Common myeloid progenitor, CD34-positive (primary cell): ENCODE measurements at regions of chr4 and their contacts with region 1.

Region 1: DNA sequence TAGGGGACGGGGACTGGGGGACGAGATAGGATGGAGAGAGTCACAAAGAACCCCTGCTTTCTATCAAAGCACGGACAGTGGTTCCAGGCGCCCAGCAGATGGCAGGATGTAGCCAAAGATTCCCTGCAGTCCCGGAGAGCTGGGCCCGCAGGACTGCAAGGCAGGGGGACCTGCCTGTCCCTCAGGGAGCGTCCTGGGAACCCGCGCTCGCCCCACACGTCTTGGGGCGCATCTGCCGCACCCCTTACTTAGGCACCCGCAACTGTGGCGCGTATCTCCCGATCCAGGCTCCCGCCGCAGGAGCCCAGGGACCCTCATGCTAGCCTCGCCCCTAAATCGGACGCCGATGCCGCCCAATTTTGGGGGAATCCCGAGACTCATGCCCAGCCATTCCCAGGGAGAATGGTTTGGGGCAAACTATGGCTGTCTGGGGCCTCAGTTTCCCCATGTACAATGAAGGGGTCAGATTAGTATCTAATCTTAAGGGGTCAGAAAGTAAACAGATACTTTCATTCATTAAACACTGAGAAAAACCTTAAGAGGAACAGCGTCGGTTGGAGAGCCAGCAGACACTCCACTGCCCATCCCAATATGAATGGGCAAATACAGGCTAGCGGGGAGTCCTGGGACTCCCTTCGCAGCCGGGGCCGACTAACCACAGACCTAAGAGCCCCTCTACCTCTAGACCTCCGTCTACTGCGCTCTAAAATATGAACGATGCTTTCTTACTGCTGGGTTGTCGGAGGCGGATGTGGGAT is 581 bp upstream of the STK32B start:
- DNase-seq: peak; percentile 82 to 83 (median 83)
- H3K4me3 ChIP-seq: peak overlapping the region; percentile 67 to 84 (median 76)
- H3K27ac ChIP-seq: no peak overlapping the region
- H3K4me1 ChIP-seq: peaks cover 0 to 32% (median 27%) of the 10 kb centered on the region in 4 experiments
- H3K27me3 ChIP-seq: no peaks in the 10 kb centered on the region

Region 2: GRCh38 chr4:4995103-4995907 is 55.4 kb before region 1 on chr4:
- CTCF ChIA-PET with region 1: interaction called, 12 read pairs
- POLR2A ChIA-PET with region 1: no interaction called
- DNase-seq: peak; percentile 63 to 73 (median 65)
- H3K4me3 ChIP-seq: peak overlapping the region in 1 of 7 experiments; percentile 39
- H3K27ac ChIP-seq: no peak overlapping the region
- H3K4me1 ChIP-seq: peaks cover 0 to 17% (median 12%) of the 10 kb centered on the region in 4 experiments
- H3K27me3 ChIP-seq: no peaks in the 10 kb centered on the region

Region 3: GRCh38 chr4:5037553-5038551 is 12.8 kb before region 1 on chr4:
- CTCF ChIA-PET with region 1: interaction called, 11 read pairs
- POLR2A ChIA-PET with region 1: interaction called, 3 read pairs
- DNase-seq: peak; percentile 77 to 97 (median 94)
- H3K4me3 ChIP-seq: peak overlapping the region in 2 of 7 experiments; percentile 3 to 4
- H3K27ac ChIP-seq: peak overlapping the region; percentile 17 to 59
- H3K4me1 ChIP-seq: peaks cover 28 to 67% (median 56%) of the 10 kb centered on the region in 4 experiments
- H3K27me3 ChIP-seq: no peaks in the 10 kb centered on the region

Region 4: DNA sequence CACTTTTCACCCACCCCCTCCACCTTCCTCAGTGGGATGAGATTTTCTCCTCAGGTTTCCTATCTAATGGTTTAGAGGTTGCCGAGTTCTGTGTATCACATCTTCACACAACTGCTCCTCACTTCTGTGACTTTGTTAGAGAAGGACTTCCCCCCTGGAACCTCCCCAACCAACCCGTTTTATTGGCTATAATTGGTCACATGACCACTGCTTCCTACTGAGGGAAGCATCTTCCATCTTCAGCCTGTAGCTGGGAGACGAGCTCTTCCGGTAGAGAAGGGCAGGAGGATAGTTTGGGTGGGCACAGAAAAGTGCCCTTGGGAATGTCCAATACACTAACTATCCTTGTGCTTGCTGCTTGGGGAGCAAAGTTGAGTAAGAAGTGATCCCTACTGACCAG is 91.1 kb after region 1 on chr4:
- CTCF ChIA-PET with region 1: interaction called, 19 read pairs
- POLR2A ChIA-PET with region 1: no interaction called
- DNase-seq: no peak
- H3K4me3 ChIP-seq: no peak overlapping the region
- H3K27ac ChIP-seq: no peak overlapping the region
- H3K4me1 ChIP-seq: no peaks in the 10 kb centered on the region
- H3K27me3 ChIP-seq: no peaks in the 10 kb centered on the region